ENCODE measurements at regions of chr16 and their contacts with region 1.

Region 1: GRCh38 chr16:26569793-26570192 is 496.9 kb upstream of the C16orf82 start:
- DNase-seq: no peak
- ATAC-seq: no peak
- H3K4me3 ChIP-seq: no peak overlapping the region
- H3K27ac ChIP-seq: no peak overlapping the region
- H3K4me1 ChIP-seq: no peaks in the 10 kb centered on the region
- H3K27me3 ChIP-seq: no peaks in the 10 kb centered on the region
- CTCF ChIP-seq: no peak
- POLR2A ChIP-seq: no peak

Region 2: DNA sequence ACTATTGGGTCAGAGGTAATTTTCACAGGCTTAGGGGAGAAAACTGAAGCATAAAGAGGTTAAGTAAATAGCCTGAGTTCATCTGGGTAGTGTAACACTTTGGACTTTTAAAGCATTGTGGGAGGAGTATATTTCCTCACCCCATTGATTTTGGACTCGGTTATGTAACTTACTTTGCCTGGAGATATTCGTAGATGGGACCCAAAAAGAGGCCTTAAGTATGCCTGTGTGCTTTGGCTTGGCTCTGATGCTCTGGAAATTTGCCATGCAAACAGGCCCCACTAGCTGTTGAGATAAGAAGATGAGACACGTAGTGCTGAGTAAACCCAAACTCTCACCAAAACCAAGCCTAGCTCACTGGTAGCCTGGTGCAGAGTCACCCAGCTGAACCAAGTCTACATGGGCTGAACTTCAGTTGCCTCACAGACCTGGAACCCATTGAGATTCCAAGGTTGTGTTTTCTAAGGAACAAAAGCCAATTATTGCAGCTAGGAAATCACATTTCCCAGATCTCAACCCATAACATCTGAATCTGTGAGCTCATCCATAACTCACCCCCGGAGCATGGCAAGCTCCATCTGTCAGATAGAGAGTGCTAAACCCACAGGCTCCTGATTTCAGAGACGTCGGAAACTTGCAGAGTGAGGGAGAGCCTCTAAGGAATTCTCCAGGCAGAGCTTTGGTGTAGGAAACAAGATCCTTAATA is 39.1 kb before region 1 on chr16:
- in situ Hi-C with region 1: no loop called
- intact Hi-C with region 1: no loop called
- DNase-seq: no peak
- ATAC-seq: no peak
- H3K4me3 ChIP-seq: no peak overlapping the region
- H3K27ac ChIP-seq: no peak overlapping the region
- H3K4me1 ChIP-seq: no peaks in the 10 kb centered on the region
- H3K27me3 ChIP-seq: no peaks in the 10 kb centered on the region
- CTCF ChIP-seq: no peak
- POLR2A ChIP-seq: no peak

Region 3: DNA sequence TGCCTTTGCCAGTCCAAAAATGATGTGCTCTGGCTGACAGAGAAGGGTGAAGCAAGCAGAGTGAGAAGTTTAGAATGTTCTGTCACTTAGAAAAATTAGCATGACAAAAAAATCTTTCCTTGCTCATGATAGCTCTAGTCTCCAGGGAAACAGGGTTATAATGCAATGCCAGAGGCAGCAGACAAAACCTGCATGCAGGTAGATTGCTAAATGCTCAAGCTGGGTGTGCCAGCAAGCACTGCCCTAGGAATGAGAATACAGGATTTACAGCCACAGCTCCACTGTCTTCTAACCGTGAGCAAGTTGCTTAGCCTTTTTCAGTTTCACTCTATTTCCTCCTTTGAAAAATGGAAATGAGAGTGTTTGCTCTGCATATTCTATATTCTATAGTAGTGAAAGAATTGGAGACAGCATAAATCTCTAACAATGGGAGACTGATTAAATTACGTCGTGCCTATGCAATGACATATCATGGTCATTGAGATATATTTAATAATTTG is 19.6 kb before region 1 on chr16:
- in situ Hi-C with region 1: no loop called
- intact Hi-C with region 1: no loop called
- DNase-seq: no peak
- ATAC-seq: no peak
- H3K4me3 ChIP-seq: no peak overlapping the region
- H3K27ac ChIP-seq: no peak overlapping the region
- H3K4me1 ChIP-seq: no peaks in the 10 kb centered on the region
- H3K27me3 ChIP-seq: no peaks in the 10 kb centered on the region
- CTCF ChIP-seq: no peak
- POLR2A ChIP-seq: no peak

Region 4: GRCh38 chr16:26623442-26623841 is 53.6 kb after region 1 on chr16:
- in situ Hi-C with region 1: loop called in 1 of 4 experiments (anchors 10 kb)
- intact Hi-C with region 1: no loop called
- DNase-seq: no peak
- ATAC-seq: no peak
- H3K4me3 ChIP-seq: no peak overlapping the region
- H3K27ac ChIP-seq: no peak overlapping the region
- H3K4me1 ChIP-seq: no peaks in the 10 kb centered on the region
- H3K27me3 ChIP-seq: no peaks in the 10 kb centered on the region
- CTCF ChIP-seq: no peak
- POLR2A ChIP-seq: no peak

Region 5: DNA sequence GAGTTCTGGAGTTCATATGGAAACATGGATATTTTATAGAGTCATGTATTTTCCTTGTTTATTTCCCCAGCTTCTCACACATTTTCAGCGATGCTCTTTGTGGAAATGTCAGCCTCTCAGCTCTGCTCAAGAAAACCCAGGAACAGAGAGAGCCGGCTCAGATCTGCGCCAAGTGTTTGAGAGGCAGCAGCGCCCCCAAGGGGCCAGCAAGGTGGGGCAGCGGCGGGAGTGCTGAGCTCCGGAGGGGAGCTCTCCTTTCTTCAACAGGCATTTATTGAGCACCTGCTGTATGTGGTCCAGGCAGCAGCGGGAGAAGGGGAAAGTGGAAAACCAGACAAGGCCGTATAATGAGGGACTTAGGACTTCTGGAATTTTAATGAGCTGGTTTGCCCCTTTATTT is 75.8 kb after region 1 on chr16:
- in situ Hi-C with region 1: no loop called
- intact Hi-C with region 1: no loop called
- DNase-seq: no peak
- ATAC-seq: no peak
- H3K4me3 ChIP-seq: no peak overlapping the region
- H3K27ac ChIP-seq: no peak overlapping the region
- H3K4me1 ChIP-seq: no peaks in the 10 kb centered on the region
- H3K27me3 ChIP-seq: no peaks in the 10 kb centered on the region
- CTCF ChIP-seq: no peak
- POLR2A ChIP-seq: no peak